Heart left ventricle (tissue), 16 donors: ENCODE measurements at regions of chr6 and their contacts with region 1.

Region 1: GRCh38 chr6:13526727-13527670 is 39.6 kb upstream of the GFOD1 start:
- DNase-seq: peak in 3 of 5 donors; percentile 52 to 60 (median 53)
- ATAC-seq: peak; percentile 44 to 82 (median 66)
- H3K4me3 ChIP-seq: no peak overlapping the region
- H3K27ac ChIP-seq: peak overlapping the region; percentile 26 to 88 (median 76)
- H3K4me1 ChIP-seq: peaks cover 3 to 57% (median 34%) of the 10 kb centered on the region in 12 donors
- H3K27me3 ChIP-seq: no peaks in the 10 kb centered on the region
- CTCF ChIP-seq: peak in 1 of 12 donors; percentile 7
- POLR2A ChIP-seq: no peak

Region 2: DNA sequence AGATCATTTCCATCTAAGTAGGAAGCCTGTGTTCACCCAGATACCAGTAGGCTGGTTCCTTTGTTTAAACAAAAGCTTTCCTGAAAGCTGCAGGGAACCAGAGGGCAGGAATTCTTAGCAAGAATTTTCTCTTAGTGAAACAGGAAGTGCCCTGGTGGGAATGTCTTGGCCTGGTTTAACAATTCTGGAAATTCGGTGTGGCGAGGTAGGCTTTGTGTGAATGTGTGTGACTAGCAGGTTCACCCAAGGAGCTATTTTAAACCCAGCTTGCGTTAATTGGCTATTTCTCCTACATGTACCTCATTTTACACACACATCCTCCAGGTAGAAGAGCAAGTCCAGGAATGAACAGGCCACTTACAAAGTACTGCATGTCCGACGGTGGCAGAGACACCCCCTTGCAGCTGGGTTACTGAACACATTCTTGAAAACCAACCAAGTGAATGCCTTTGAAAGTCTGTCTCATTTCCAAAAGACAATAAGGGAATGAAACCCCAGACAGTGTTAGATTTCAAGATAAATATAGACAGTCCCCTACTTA is 104.2 kb before region 1 on chr6:
- intact Hi-C with region 1: loop called in 2 of 10 experiments (anchors 5 to 10 kb)
- DNase-seq: peak in 1 of 5 donors; percentile 39
- ATAC-seq: peak in 3 of 4 donors; percentile 32 to 46 (median 32)
- H3K4me3 ChIP-seq: no peak overlapping the region
- H3K27ac ChIP-seq: peak overlapping the region; percentile 1 to 88 (median 72)
- H3K4me1 ChIP-seq: peaks cover 33 to 100% (median 92%) of the 10 kb centered on the region in 12 donors
- H3K27me3 ChIP-seq: no peaks in the 10 kb centered on the region
- CTCF ChIP-seq: no peak
- POLR2A ChIP-seq: no peak